HCT116 (cell line): ENCODE measurements at regions of chr14 and their contacts with region 1.

Region 1: DNA sequence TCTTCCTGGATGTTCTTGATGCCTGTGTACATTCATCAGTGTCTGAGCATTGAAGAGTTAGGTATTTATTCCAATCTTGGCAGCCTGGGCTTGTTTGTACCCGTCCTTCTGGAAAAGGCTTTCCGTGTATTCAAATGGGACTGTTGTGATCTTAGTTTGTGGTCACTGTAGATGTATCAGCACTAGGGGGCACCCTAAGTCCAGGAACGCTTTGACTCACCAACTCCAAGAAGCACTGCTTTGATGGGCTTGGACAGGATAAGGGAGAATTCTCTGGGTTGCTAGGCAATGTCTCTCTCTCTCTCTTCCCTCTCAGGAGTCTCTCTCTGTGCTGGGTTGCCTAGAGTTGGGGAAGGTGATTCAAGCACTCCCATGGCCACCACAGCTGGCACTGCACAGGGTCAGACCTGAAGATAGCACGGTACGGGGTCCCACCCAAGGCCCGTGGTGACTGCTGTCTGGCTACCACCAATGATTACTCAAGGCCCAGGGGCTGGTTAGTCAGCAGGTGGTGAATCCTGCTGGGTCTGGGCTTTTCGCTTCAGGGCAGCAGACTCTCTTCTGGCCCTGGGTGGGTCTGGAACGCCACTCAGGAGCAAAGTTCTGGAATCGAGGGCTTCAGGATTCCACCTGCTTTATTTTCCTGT is 211.1 kb upstream of the RGS6 start:
- DNase-seq: peak; percentile 57
- ATAC-seq: peak; percentile 94
- H3K4me3 ChIP-seq: no peak overlapping the region
- H3K27ac ChIP-seq: no peak overlapping the region
- H3K4me1 ChIP-seq: no peaks in the 10 kb centered on the region
- H3K27me3 ChIP-seq: no peaks in the 10 kb centered on the region
- CTCF ChIP-seq: peak; percentile 48 to 80 (median 79); a peak in 5 of 6 replicates
- POLR2A ChIP-seq: no peak
- RAD21 ChIP-seq: peak; percentile 81

Region 2: GRCh38 chr14:71290960-71291466 is 430.1 kb before region 1 on chr14:
- CTCF ChIA-PET with region 1: no interaction called
- POLR2A ChIA-PET with region 1: no interaction called
- RAD21 ChIA-PET with region 1: no interaction called
- intact Hi-C with region 1: no loop called
- DNase-seq: peak; percentile 23
- ATAC-seq: peak; percentile 47; the same call in 1 of the 2 replicates
- H3K4me3 ChIP-seq: no peak overlapping the region
- H3K27ac ChIP-seq: no peak overlapping the region
- H3K4me1 ChIP-seq: peaks cover 0 to 15% of the 10 kb centered on the region in 2 experiments; a peak in 2 of 4 replicates
- H3K27me3 ChIP-seq: no peaks in the 10 kb centered on the region
- CTCF ChIP-seq: no peak
- POLR2A ChIP-seq: no peak
- RAD21 ChIP-seq: no peak

Region 3: GRCh38 chr14:71855399-71856036 is 134.4 kb after region 1 on chr14:
- CTCF ChIA-PET with region 1: no interaction called
- POLR2A ChIA-PET with region 1: no interaction called
- RAD21 ChIA-PET with region 1: no interaction called
- intact Hi-C with region 1: loop called (anchors 1 kb)
- DNase-seq: peak; percentile 46
- ATAC-seq: peak; percentile 83
- H3K4me3 ChIP-seq: no peak overlapping the region
- H3K27ac ChIP-seq: no peak overlapping the region
- H3K4me1 ChIP-seq: no peaks in the 10 kb centered on the region
- H3K27me3 ChIP-seq: no peaks in the 10 kb centered on the region
- CTCF ChIP-seq: peak; percentile 55 to 91 (median 77); a peak in 5 of 6 replicates
- POLR2A ChIP-seq: no peak
- RAD21 ChIP-seq: peak; percentile 73

Region 4: DNA sequence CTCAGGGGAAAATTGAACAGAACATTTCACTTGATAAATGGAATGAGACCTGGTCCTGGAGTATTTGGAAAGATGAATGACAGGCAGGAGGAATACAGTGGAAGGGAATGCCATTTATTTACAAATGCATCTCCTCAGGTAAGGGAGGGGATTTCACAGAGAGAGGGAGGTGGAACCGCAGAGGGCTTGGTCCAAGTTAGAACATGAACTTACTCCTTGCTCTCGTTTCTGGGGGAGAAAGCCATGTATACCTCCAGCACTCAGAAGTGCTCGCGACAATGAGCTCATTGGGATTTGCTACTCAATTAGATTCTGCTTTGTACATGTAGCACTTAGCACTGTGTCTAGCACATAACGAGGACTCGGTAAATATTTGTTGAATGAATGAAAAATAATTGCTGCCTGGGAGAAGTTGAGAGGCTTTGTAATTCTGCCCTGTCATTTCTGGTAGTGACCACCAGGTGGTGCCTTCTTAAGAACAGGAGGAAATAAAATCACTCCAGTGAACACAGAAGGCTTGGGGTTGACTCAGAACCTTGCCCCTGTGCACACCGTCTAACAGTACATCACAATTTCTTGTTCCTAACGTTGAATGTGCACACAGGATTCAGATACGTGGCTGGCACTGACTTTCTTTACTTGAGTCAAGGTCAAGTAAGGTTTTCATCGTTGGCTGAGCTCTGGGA is 302.8 kb after region 1 on chr14:
- CTCF ChIA-PET with region 1: no interaction called
- POLR2A ChIA-PET with region 1: no interaction called
- RAD21 ChIA-PET with region 1: no interaction called
- intact Hi-C with region 1: loop called (anchors 5 kb)
- DNase-seq: peak; percentile 65
- ATAC-seq: peak; percentile 72
- H3K4me3 ChIP-seq: peak overlapping the region; percentile 4 to 53; a peak in 3 of 4 replicates
- H3K27ac ChIP-seq: peak overlapping the region; percentile 69
- H3K4me1 ChIP-seq: peaks cover 23 to 26% of the 10 kb centered on the region in 2 experiments
- H3K27me3 ChIP-seq: no peaks in the 10 kb centered on the region
- CTCF ChIP-seq: peak; percentile 42 to 84 (median 73); a peak in 5 of 6 replicates
- POLR2A ChIP-seq: no peak
- RAD21 ChIP-seq: peak; percentile 64